Activated CD8-positive, alpha-beta T cell treated with anti-CD3 and anti-CD28 coated beads, Interleukin-2, amount 10 ng/mL, durations not matched to agents 7 days and 5 days (primary cell): ENCODE measurements at regions of chr10 and their contacts with region 1.

Region 1: DNA sequence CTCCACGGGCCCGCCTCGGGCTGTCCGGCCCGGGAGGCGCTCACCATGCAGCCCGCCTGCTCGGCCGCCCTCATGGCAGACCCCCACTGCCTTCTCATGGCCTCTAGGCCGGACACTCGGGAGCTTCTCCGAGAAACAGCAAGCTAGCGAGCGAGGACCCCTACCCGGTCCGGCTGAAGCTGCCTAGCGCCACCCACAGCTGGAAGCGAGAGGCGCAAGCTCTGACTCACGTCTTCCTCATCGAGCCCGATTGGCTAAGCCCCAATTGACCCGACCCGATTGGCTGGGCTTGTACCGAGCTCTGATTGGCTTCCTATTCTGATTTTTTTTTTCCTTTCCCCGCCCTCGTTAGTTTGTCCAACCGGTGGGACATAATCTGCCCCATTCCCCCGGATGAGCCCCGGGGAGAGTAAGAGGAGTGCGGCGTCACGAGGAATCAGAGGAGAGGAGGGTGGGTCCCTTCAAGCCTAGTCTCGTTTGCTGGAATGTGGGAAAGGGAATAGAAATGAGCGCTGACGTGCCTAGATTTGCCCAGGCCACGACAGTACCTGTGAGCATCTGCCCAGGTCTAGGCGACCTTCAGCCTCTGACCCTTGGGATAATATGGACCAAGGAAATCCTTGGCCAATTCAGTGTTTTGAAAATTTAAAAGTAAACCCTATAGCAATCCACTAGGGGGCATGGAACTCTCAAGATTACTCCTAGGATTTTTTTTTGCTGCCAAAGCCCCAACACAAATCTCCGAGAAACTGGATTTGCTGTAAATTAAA is at the start of gene TYSND1:
- DNase-seq: peak; percentile 96
- ATAC-seq: peak; percentile 86
- H3K4me3 Mint-ChIP-seq: peak within 1 kb of the TSS; percentile 92
- H3K27ac Mint-ChIP-seq: peak within 1 kb of the TSS; percentile 99
- H3K4me1 Mint-ChIP-seq: peaks cover 35% of the 10 kb centered on the region
- H3K27me3 Mint-ChIP-seq: no peaks in the 10 kb centered on the region
- total RNA-seq, gene TYSND1: 12.0 to 13.4 TPM

Region 2: DNA sequence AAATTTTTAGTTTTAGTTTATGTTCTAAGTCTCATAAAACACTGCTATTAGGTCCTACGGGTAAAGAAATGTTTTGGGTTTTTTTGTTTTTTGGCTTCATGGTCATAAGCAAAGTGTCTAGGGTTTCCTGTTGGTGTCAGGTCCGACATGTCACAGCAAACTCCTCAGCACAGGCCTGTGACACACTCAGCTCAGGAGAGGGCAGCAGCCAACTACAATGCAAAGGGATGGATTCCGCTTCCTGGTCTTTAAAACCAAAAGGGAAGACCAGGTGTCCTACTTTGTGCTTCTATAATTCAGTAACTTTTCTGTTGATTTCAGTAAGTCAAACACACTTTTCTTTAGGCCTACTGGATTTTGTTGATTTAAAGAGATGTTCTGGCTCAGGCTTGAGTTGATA is 177.8 kb before region 1 on chr10:
- CTCF ChIA-PET with region 1: no interaction called
- POLR2A ChIA-PET with region 1: no interaction called
- DNase-seq: no peak
- ATAC-seq: no peak
- H3K4me3 Mint-ChIP-seq: no peak overlapping the region
- H3K27ac Mint-ChIP-seq: no peak overlapping the region
- H3K4me1 Mint-ChIP-seq: no peaks in the 10 kb centered on the region
- H3K27me3 Mint-ChIP-seq: peaks cover 27% of the 10 kb centered on the region

Region 3: DNA sequence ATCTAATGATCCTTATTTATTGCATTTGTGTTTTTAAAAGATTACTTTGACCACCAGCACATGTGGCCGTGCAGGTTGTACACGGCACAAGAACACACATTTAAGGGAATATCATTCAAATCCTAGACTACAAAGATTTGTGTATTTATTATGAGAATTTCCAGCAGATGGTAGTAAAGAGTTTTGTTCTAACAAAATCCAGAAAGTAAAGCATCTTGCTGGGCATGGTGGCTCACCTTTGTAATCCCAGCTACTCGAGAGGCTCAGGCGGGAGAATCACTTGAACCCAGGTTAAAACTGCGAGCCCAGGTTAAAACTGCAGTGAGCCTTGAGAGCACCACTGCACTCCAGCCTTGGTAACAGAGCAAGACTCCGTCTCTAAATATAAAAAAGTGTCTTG is 62.5 kb before region 1 on chr10:
- CTCF ChIA-PET with region 1: interaction called, 19 read pairs
- POLR2A ChIA-PET with region 1: no interaction called
- DNase-seq: no peak
- ATAC-seq: no peak
- H3K4me3 Mint-ChIP-seq: no peak overlapping the region
- H3K27ac Mint-ChIP-seq: no peak overlapping the region
- H3K4me1 Mint-ChIP-seq: no peaks in the 10 kb centered on the region
- H3K27me3 Mint-ChIP-seq: peaks cover 11% of the 10 kb centered on the region

Region 4: DNA sequence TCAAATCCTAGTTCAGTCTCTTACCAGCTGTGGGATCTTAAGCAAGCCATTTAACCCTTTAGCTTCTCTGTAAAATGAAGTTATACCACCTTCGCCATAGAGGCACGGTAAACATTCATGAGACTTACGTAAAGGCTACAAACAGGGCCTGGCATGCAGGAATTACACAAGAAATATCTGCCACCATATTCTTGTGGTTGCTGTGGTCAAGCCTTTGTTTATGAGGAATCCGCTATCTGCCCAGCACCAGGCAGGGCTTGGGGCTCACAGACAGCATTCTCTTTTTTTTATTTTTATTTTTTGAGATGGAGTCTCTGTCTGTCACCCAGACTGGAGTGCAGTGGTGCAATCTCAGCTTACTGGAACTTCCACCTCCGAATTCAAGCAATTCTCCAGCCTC is 23.9 kb before region 1 on chr10:
- CTCF ChIA-PET with region 1: interaction called, 97 read pairs
- POLR2A ChIA-PET with region 1: interaction called, 3 read pairs
- DNase-seq: no peak
- ATAC-seq: no peak
- H3K4me3 Mint-ChIP-seq: no peak overlapping the region
- H3K27ac Mint-ChIP-seq: no peak overlapping the region
- H3K4me1 Mint-ChIP-seq: peaks cover 17% of the 10 kb centered on the region
- H3K27me3 Mint-ChIP-seq: no peaks in the 10 kb centered on the region

Region 5: GRCh38 chr10:70169649-70170364 is 23.1 kb after region 1 on chr10:
- CTCF ChIA-PET with region 1: interaction called, 67 read pairs
- POLR2A ChIA-PET with region 1: interaction called, 19 read pairs
- DNase-seq: peak; percentile 38
- ATAC-seq: peak; percentile 11
- H3K4me3 Mint-ChIP-seq: peak overlapping the region; percentile 86
- H3K27ac Mint-ChIP-seq: peak overlapping the region; percentile 99
- H3K4me1 Mint-ChIP-seq: peaks cover 65% of the 10 kb centered on the region
- H3K27me3 Mint-ChIP-seq: no peaks in the 10 kb centered on the region

Region 6: DNA sequence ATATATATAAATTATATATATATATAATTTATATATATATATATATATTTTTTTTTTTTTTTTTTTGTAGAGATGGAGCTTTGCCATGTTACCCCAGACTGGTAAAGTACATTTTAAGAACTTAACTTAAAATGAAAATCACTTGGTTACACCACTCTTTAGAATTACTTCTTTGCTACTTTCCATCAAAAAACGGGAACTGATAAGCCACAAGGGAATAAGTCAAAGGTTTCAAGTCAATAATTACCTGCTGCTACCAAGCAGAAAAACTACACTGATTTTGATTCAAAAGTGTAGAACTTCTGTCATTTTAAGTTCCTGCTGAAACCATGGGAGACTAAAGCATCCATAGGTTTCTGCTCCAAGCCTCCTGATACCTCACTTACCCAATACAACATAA is 74.4 kb after region 1 on chr10:
- CTCF ChIA-PET with region 1: interaction called, 50 read pairs
- POLR2A ChIA-PET with region 1: interaction called, 8 read pairs
- DNase-seq: no peak
- ATAC-seq: no peak
- H3K4me3 Mint-ChIP-seq: no peak overlapping the region
- H3K27ac Mint-ChIP-seq: no peak overlapping the region
- H3K4me1 Mint-ChIP-seq: peaks cover 21% of the 10 kb centered on the region
- H3K27me3 Mint-ChIP-seq: no peaks in the 10 kb centered on the region

Region 7: GRCh38 chr10:70293169-70293813 is 146.6 kb after region 1 on chr10:
- CTCF ChIA-PET with region 1: no interaction called
- POLR2A ChIA-PET with region 1: no interaction called
- DNase-seq: no peak
- ATAC-seq: no peak
- H3K4me3 Mint-ChIP-seq: no peak overlapping the region
- H3K27ac Mint-ChIP-seq: no peak overlapping the region
- H3K4me1 Mint-ChIP-seq: peaks cover 12% of the 10 kb centered on the region
- H3K27me3 Mint-ChIP-seq: peaks cover 9% of the 10 kb centered on the region

Region 8: DNA sequence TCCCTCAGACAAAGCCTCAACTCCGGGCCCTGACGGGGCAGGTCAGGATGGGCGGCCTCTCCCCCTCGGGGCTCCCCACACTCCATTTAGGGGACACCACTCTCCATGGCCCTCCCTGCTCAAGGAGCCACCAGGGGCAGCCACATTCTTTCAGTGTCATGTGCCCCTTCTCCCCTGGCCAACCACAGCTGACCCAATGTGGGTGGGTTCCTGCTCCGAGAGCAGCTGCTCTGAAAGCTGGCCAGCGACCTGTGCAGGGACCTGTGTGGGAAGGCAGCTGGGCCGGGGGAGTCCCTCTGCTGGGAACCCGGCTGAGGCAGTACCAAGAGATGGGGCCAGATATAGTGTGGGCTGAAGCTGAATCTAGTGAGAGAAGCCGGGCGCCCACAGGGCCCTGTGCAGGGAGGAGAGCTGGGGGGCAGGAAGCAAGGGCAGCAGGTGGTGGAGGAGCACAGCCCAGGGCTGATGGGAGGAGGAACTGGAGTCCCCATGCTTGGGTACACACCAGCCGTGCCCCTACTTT is 177.7 kb after region 1 on chr10:
- CTCF ChIA-PET with region 1: no interaction called
- POLR2A ChIA-PET with region 1: no interaction called
- DNase-seq: peak; percentile 50
- ATAC-seq: peak; percentile 53
- H3K4me3 Mint-ChIP-seq: peak overlapping the region; percentile 29
- H3K27ac Mint-ChIP-seq: peak overlapping the region; percentile 96
- H3K4me1 Mint-ChIP-seq: peaks cover 55% of the 10 kb centered on the region
- H3K27me3 Mint-ChIP-seq: no peaks in the 10 kb centered on the region

Region 9: GRCh38 chr10:70404036-70404786 is 257.5 kb after region 1 on chr10 and contains the start of gene EIF4EBP2:
- CTCF ChIA-PET with region 1: interaction called, 11 read pairs
- POLR2A ChIA-PET with region 1: interaction called, 6 read pairs
- DNase-seq: peak; percentile 98
- ATAC-seq: peak; percentile 90
- H3K4me3 Mint-ChIP-seq: peak within 1 kb of the TSS; percentile 86
- H3K27ac Mint-ChIP-seq: peak within 1 kb of the TSS; percentile 90
- H3K4me1 Mint-ChIP-seq: peaks cover 35% of the 10 kb centered on the region
- H3K27me3 Mint-ChIP-seq: no peaks in the 10 kb centered on the region
- total RNA-seq, gene EIF4EBP2: 58.7 to 60.8 TPM